GM23248 (cell line): ENCODE measurements at regions of chr17 and their contacts with region 1.

Region 1: GRCh38 chr17:52477824-52478699 is 319.5 kb upstream of the CA10 start:
- DNase-seq: no peak
- H3K4me3 ChIP-seq: no peak overlapping the region
- H3K27ac ChIP-seq: no peak overlapping the region
- H3K4me1 ChIP-seq: no peaks in the 10 kb centered on the region
- H3K27me3 ChIP-seq: no peaks in the 10 kb centered on the region

Region 2: GRCh38 chr17:52373291-52373940 is 104.6 kb before region 1 on chr17:
- in situ Hi-C with region 1: loop called (anchors 25 kb)
- DNase-seq: no peak
- H3K4me3 ChIP-seq: no peak overlapping the region
- H3K27ac ChIP-seq: no peak overlapping the region
- H3K4me1 ChIP-seq: no peaks in the 10 kb centered on the region
- H3K27me3 ChIP-seq: no peaks in the 10 kb centered on the region

Region 3: DNA sequence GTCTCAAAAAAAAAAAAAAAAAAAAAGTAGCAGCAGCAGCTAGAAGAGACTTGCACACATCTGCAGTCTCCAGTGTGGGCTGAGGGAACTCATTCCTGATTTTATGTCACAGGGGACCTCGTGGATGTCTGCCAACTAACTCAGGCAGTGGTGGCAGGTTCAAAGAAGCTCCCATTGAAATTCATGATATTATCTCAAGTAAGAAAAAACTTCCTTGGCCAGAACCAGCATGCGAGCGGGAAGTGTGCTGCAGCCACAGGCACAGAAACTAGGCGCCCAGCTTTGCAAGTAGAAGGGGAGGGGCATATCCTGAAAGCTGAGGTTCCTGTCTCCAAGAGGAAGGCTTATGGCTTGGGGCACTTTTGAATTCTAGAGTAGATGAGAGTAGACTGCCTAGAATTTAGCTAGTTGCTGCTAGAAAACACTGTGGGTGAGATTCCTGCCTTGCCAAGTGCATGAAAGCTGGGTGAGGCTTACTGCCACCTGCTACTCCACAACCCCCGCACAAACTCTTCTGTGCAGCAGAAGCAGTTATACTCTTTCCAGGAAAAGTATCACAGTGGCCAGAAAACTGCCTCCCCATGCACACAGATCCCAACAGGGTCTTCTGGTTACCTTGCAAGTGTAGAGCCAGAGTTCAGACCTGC is 284.2 kb after region 1 on chr17:
- in situ Hi-C with region 1: no loop called
- DNase-seq: no peak
- H3K4me3 ChIP-seq: no peak overlapping the region
- H3K27ac ChIP-seq: no peak overlapping the region
- H3K4me1 ChIP-seq: no peaks in the 10 kb centered on the region
- H3K27me3 ChIP-seq: no peaks in the 10 kb centered on the region